ENCODE measurements at regions of chr14 and their contacts with region 1.

Region 1: DNA sequence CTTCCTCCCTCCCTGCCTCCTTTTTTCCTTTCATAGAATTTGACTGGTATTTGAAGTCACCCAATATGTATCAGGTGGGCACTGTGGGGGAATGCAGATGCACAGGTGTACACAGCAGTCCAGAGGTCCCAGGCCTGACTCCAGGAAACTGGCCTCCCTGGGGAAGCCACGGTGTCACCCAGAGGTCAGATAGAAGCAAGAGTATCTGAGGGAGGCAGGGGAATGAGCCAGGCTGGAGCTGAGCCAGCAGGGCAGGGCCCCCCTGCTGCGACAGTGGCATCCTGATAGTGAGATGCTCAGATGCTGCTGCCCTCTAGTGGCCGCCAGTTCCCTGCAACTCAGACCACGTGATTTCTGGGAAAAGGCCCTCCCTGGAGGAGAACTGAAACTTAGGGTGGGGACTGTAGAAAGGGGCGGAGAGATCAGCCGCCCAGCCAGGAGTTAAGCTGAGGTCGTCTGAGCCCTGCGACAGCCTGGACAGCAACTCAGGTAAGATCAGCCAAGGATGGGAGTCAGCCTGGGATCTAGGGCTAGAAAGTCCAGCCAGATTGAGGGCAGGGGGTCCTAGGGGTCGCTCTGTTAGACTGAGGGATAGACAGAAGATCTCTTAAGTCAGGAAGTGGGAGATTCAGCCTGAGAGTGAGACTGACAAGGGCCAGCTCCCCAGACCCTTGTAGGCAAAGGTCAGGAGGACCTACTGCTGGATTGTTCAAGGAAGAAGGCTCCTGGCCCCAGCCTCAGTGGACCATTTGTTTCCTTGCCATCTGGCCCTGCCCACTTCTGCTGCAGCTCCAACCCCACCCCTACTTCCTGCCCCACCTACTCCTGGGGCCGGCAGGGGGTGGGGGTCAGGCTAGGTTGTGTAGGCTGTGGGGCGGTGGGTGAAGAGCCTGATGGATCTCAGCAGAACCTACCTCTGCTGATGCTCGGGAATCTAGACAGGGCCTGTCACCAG is at the start of gene IRF9:
- DNase-seq: peak; percentile 99
- H3K4me3 Mint-ChIP-seq: peak within 1 kb of the TSS; percentile 99
- H3K27ac Mint-ChIP-seq: peak within 1 kb of the TSS; percentile 100
- H3K4me1 Mint-ChIP-seq: peaks cover 43% of the 10 kb centered on the region
- H3K27me3 Mint-ChIP-seq: no peaks in the 10 kb centered on the region
- total RNA-seq, gene IRF9: 202 to 212 TPM

Region 2: GRCh38 chr14:24036169-24036962 is 124.8 kb before region 1 on chr14:
- CTCF ChIA-PET with region 1: no interaction called
- intact Hi-C with region 1: loop called (anchors 1 kb)
- DNase-seq: peak; percentile 78
- H3K4me3 Mint-ChIP-seq: peak overlapping the region; percentile 91
- H3K27ac Mint-ChIP-seq: peak overlapping the region; percentile 83
- H3K4me1 Mint-ChIP-seq: peaks cover 5% of the 10 kb centered on the region
- H3K27me3 Mint-ChIP-seq: no peaks in the 10 kb centered on the region

Region 3: DNA sequence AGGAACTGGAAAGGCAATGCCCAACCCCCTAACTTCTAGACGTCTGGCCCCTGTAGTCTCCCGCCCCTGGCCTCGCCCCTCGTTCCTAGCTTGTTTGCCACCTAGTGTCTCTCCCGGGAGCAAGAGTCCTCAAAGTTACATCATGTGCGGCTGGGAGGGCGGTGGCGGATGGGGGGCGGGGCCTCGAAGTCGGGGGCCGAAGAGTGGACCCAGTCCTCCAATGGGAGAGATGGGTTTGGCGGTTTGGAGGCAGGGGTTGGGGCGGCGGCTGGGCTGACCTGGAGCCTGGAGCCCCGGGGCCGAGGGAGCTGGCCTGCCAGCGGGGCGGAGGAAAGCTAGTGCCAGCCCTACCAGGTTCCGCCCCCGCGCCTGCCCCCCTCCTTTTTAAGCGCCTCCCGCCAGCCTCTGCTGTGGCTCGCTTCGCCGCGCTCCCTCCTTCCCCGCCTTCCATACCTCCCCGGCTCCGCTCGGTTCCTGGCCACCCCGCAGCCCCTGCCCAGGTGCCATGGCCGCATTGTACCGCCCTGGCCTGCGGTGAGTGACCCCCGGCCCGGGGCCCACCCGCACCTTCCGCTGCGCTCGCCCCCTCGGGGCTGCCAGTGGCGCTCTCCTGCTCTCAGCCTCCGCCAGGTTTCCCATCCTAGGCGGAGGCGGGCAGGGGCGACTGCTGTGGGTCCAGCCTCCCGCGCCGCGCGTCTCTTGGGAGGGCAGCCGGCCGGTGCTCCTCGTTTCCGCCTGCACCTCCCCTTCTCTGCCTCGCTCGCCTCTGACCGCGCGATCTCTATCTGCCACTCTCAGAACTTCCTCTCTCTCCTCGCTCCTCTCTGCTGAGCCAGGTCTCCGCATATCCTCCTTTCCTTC is 67.0 kb before region 1 on chr14 and contains the start of gene PCK2:
- CTCF ChIA-PET with region 1: interaction called, 7 read pairs
- intact Hi-C with region 1: loop called (anchors 1 kb)
- DNase-seq: peak; percentile 94
- H3K4me3 Mint-ChIP-seq: peak within 1 kb of the TSS; percentile 99
- H3K27ac Mint-ChIP-seq: peak within 1 kb of the TSS; percentile 98
- H3K4me1 Mint-ChIP-seq: peaks cover 32% of the 10 kb centered on the region
- H3K27me3 Mint-ChIP-seq: no peaks in the 10 kb centered on the region
- total RNA-seq, gene PCK2: 117 TPM

Region 4: DNA sequence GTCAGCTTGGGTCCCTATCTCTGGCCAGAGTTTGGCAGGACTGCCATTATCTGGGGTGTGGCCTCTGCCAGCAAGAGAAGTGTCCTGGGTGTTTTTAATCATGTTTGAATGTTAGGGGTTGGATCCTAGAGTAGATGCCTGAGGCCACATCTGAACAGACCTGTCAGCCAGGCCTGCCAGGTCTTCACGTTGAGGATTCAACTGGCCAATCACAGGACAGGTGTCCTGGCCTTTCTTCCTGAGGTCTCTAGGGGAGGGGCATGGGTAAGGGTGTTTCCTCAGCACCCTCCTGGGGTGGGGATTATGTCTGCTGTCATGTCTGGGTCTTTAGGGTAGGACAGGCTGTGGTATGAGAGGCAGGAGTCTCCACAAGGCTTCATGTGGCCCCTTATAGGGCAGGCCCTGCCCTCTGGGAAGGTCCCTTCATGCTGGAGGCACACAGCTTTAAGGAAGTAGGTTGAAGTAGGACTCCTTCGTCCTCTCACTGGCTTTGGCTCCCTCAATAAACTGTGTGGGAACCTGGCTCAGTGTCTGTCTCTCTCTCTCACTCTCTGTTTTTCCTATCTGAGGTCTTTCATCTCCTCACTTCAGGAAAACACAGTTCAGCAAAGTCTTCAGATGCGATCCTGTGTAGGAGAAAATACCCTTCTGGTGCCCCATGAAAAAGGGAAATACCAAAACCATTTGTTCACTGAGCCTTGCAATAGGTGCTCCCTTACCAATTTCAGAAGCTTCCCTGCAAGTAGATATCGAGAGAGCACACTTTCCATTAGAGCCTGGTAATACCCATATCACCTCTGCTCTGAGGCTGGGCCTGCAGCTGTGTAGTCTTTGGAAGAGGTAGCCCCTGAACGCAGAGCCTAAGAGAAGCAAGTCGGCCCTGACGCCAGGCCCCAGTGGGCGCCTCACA is 37.4 kb before region 1 on chr14:
- CTCF ChIA-PET with region 1: no interaction called
- intact Hi-C with region 1: no loop called
- DNase-seq: no peak
- H3K4me3 Mint-ChIP-seq: no peak overlapping the region
- H3K27ac Mint-ChIP-seq: no peak overlapping the region
- H3K4me1 Mint-ChIP-seq: peaks cover 3% of the 10 kb centered on the region
- H3K27me3 Mint-ChIP-seq: no peaks in the 10 kb centered on the region

Region 5: GRCh38 chr14:24146978-24147760 is 14.0 kb before region 1 on chr14 and contains the start of gene RNF31:
- CTCF ChIA-PET with region 1: interaction called, 63 read pairs
- intact Hi-C with region 1: loop called (anchors 1 kb)
- DNase-seq: peak; percentile 99
- H3K4me3 Mint-ChIP-seq: peak within 1 kb of the TSS; percentile 97
- H3K27ac Mint-ChIP-seq: peak within 1 kb of the TSS; percentile 99
- H3K4me1 Mint-ChIP-seq: peaks cover 54% of the 10 kb centered on the region
- H3K27me3 Mint-ChIP-seq: no peaks in the 10 kb centered on the region
- total RNA-seq, gene RNF31: 51.1 to 53.8 TPM

Region 6: GRCh38 chr14:24241829-24242443 is 80.8 kb after region 1 on chr14:
- CTCF ChIA-PET with region 1: interaction called, 3 read pairs
- intact Hi-C with region 1: loop called (anchors 1 kb)
- DNase-seq: peak; percentile 94
- H3K4me3 Mint-ChIP-seq: peak overlapping the region; percentile 97
- H3K27ac Mint-ChIP-seq: peak overlapping the region; percentile 100
- H3K4me1 Mint-ChIP-seq: peaks cover 49% of the 10 kb centered on the region
- H3K27me3 Mint-ChIP-seq: no peaks in the 10 kb centered on the region

Region 7: DNA sequence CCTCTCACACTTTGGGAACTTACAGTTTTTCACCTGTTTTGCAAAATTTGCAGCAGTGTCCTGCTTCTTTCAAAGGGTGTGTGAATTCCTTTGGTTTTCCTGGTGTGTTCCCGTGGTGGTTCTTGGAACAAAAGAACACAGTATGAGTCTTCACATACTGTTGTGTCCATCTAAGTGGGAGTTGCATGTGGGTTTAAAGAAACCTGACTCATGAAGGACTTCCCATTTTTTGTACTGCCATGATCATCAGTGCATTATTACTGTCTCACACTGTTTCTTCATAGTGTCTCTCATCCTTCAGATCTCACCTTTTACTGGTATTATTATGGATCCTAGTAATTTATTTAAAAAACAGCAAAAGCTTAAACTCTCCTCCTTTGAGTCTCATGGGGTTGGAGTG is 452.1 kb after region 1 on chr14:
- CTCF ChIA-PET with region 1: no interaction called
- intact Hi-C with region 1: no loop called
- DNase-seq: no peak
- H3K4me3 Mint-ChIP-seq: no peak overlapping the region
- H3K27ac Mint-ChIP-seq: no peak overlapping the region
- H3K4me1 Mint-ChIP-seq: peaks cover 33% of the 10 kb centered on the region
- H3K27me3 Mint-ChIP-seq: no peaks in the 10 kb centered on the region